Gastrocnemius medialis (tissue), 4 donors: ENCODE measurements at regions of chr2 and their contacts with region 1.

Region 1: GRCh38 chr2:128145651-128146050 is 54.7 kb downstream of the UGGT1 start:
- DNase-seq: no peak
- ATAC-seq: no peak
- H3K4me3 ChIP-seq: no peak overlapping the region
- H3K27ac ChIP-seq: no peak overlapping the region
- H3K4me1 ChIP-seq: no peaks in the 10 kb centered on the region
- H3K27me3 ChIP-seq: no peaks in the 10 kb centered on the region
- CTCF ChIP-seq: no peak
- POLR2A ChIP-seq: no peak

Region 2: GRCh38 chr2:127324635-127325034 is 821.0 kb before region 1 on chr2:
- in situ Hi-C with region 1: loop called in 1 of 4 experiments (anchors 25 kb)
- intact Hi-C with region 1: no loop called
- DNase-seq: no peak
- ATAC-seq: no peak
- H3K4me3 ChIP-seq: no peak overlapping the region
- H3K27ac ChIP-seq: no peak overlapping the region
- H3K4me1 ChIP-seq: no peaks in the 10 kb centered on the region
- H3K27me3 ChIP-seq: no peaks in the 10 kb centered on the region
- CTCF ChIP-seq: peak; percentile 9 to 39 (median 38)
- POLR2A ChIP-seq: no peak